ENCODE measurements at regions of chr14 and their contacts with region 1.

Region 1: GRCh38 chr14:56117765-56118610 is at the start of gene PELI2:
- DNase-seq: peak; percentile 66 to 94 (median 82)
- ATAC-seq: peak; percentile 86
- H3K4me3 ChIP-seq: peak within 1 kb of the TSS; percentile 73 to 74
- H3K4me3 Mint-ChIP-seq: peak within 1 kb of the TSS; percentile 95
- H3K27ac ChIP-seq: peak within 1 kb of the TSS; percentile 67 to 92
- H3K27ac Mint-ChIP-seq: peak within 1 kb of the TSS; percentile 99
- H3K4me1 ChIP-seq: peaks cover 34% of the 10 kb centered on the region
- H3K4me1 Mint-ChIP-seq: peaks cover 49% of the 10 kb centered on the region
- H3K27me3 ChIP-seq: no peaks in the 10 kb centered on the region
- H3K27me3 Mint-ChIP-seq: peaks cover 4% of the 10 kb centered on the region
- CTCF ChIP-seq: no peak
- total RNA-seq, gene PELI2: 13.3 to 15.1 TPM

Region 2: DNA sequence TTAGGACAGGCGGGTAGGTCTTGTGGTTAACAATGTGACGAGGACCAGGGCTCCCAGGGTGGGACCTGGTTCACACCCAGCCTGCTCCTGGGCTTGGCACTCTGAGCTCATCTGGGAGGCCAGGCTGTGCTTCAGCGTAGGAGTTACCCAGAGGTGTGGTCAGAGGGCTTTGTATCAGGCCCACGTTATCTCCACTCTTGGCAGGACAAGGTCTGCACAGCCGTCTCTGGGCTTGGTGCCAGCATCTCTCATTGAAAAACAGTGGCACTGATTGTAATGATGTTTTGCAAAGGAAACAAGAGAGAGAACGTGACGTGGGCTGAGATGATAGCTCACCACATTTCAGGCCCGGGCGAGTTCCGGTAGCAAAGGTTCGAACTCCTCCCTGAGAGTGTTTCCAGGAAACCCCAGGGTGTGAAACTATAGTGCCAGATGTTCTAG is 310.9 kb before region 1 on chr14:
- CTCF ChIA-PET with region 1: no interaction called
- POLR2A ChIA-PET with region 1: no interaction called
- intact Hi-C with region 1: loop called (anchors 2 to 5 kb)
- DNase-seq: peak; percentile 54 to 92 (median 77)
- ATAC-seq: peak; percentile 87
- H3K4me3 ChIP-seq: no peak overlapping the region
- H3K4me3 Mint-ChIP-seq: peak overlapping the region; percentile 44
- H3K27ac ChIP-seq: peak overlapping the region; percentile 34 to 81
- H3K27ac Mint-ChIP-seq: peak overlapping the region; percentile 85
- H3K4me1 ChIP-seq: peaks cover 17% of the 10 kb centered on the region
- H3K4me1 Mint-ChIP-seq: peaks cover 24% of the 10 kb centered on the region
- H3K27me3 ChIP-seq: no peaks in the 10 kb centered on the region
- H3K27me3 Mint-ChIP-seq: no peaks in the 10 kb centered on the region
- CTCF ChIP-seq: no peak

Region 3: DNA sequence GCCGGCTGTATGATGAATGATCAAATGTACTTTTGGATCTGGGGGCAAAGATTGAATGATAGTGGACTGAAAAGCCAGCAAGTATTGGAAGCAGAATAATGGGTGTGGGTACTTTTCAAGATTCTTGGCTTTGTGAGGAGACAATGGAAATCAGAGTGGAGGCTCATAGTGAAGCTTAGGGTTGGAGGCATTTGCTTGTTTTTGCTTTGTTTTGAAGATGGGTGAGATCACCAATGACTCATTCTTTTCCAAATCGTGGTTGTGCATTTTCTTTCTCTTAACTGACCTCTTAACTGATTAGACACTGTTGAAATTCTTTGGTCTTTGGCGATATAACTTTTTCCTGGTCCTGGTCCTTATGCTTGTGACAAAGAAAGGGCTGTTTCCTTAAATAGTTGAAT is 54.6 kb after region 1 on chr14:
- CTCF ChIA-PET with region 1: interaction called, 3 read pairs
- POLR2A ChIA-PET with region 1: interaction called, 3 read pairs
- intact Hi-C with region 1: loop called in 1 of 2 experiments (anchors 2 kb)
- DNase-seq: no peak
- ATAC-seq: no peak
- H3K4me3 ChIP-seq: no peak overlapping the region
- H3K4me3 Mint-ChIP-seq: peak overlapping the region; percentile 11
- H3K27ac ChIP-seq: no peak overlapping the region
- H3K27ac Mint-ChIP-seq: peak overlapping the region; percentile 84
- H3K4me1 ChIP-seq: peaks cover 22% of the 10 kb centered on the region
- H3K4me1 Mint-ChIP-seq: peaks cover 56% of the 10 kb centered on the region
- H3K27me3 ChIP-seq: no peaks in the 10 kb centered on the region
- H3K27me3 Mint-ChIP-seq: no peaks in the 10 kb centered on the region
- CTCF ChIP-seq: no peak

Region 4: GRCh38 chr14:56202256-56202655 is 84.3 kb after region 1 on chr14:
- CTCF ChIA-PET with region 1: no interaction called
- POLR2A ChIA-PET with region 1: no interaction called
- intact Hi-C with region 1: no loop called
- DNase-seq: no peak
- ATAC-seq: no peak
- H3K4me3 ChIP-seq: no peak overlapping the region
- H3K4me3 Mint-ChIP-seq: no peak overlapping the region
- H3K27ac ChIP-seq: no peak overlapping the region
- H3K27ac Mint-ChIP-seq: no peak overlapping the region
- H3K4me1 ChIP-seq: no peaks in the 10 kb centered on the region
- H3K4me1 Mint-ChIP-seq: no peaks in the 10 kb centered on the region
- H3K27me3 ChIP-seq: no peaks in the 10 kb centered on the region
- H3K27me3 Mint-ChIP-seq: no peaks in the 10 kb centered on the region
- CTCF ChIP-seq: no peak

Region 5: GRCh38 chr14:56676050-56676449 is 558.1 kb after region 1 on chr14:
- CTCF ChIA-PET with region 1: no interaction called
- POLR2A ChIA-PET with region 1: no interaction called
- intact Hi-C with region 1: no loop called
- DNase-seq: no peak
- ATAC-seq: no peak
- H3K4me3 ChIP-seq: no peak overlapping the region
- H3K4me3 Mint-ChIP-seq: no peak overlapping the region
- H3K27ac ChIP-seq: no peak overlapping the region
- H3K27ac Mint-ChIP-seq: no peak overlapping the region
- H3K4me1 ChIP-seq: no peaks in the 10 kb centered on the region
- H3K4me1 Mint-ChIP-seq: no peaks in the 10 kb centered on the region
- H3K27me3 ChIP-seq: no peaks in the 10 kb centered on the region
- H3K27me3 Mint-ChIP-seq: no peaks in the 10 kb centered on the region
- CTCF ChIP-seq: no peak

Region 6: DNA sequence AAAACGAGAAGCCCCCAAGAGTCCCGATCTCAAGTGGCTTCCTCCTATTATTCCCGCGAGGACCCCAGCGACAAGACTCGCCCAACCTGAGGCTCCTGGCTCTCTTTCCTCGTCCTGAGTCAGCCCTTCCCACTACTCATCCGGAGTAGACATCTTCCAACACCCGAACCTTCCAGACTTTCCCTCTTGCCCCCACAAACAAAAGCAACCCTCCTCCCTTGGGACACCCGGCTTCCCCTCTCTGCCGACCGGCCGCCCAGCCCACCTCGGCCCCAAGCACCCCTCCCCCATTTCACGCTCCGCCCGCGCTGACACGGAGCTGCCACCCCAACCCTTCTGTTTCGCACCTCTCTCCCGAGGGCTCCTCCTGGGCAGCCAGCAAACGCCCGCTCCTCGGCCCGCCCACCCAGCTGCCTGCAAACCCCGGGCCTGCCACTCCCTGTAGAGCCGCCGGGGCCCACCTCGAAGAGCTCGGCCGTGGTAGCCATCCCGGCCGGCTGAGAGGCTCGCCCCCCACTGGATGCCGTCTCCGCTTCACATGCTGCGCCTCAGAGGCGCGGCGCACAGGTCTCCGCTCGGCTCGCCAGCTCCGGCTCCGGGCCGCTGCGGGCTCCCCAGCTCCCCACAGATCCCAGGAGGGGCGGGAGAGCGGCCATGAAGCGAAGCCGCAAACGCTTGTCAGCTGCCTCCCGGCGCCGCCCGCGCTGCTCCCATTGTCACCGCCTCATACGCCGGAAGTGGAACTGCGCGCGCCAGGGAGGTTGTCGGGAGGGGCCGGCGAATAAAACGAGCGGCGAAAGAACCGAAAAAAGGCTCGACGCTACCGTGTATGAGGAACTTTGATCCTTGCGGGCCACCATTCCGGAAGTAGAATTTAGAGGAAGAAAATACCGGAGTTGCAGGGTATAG is 1150.4 kb after region 1 on chr14 and contains the starts of genes AP5M1 and EXOC5:
- CTCF ChIA-PET with region 1: no interaction called
- POLR2A ChIA-PET with region 1: no interaction called
- intact Hi-C with region 1: loop called (anchors 5 kb)
- DNase-seq: peak; percentile 80 to 97 (median 91)
- ATAC-seq: peak; percentile 80
- H3K4me3 ChIP-seq: peak within 1 kb of the TSS; percentile 77 to 84
- H3K4me3 Mint-ChIP-seq: peak within 1 kb of the TSS; percentile 99
- H3K27ac ChIP-seq: peak within 1 kb of the TSS; percentile 85 to 90
- H3K27ac Mint-ChIP-seq: peak within 1 kb of the TSS; percentile 100
- H3K4me1 ChIP-seq: peaks cover 35% of the 10 kb centered on the region
- H3K4me1 Mint-ChIP-seq: peaks cover 70% of the 10 kb centered on the region
- H3K27me3 ChIP-seq: no peaks in the 10 kb centered on the region
- H3K27me3 Mint-ChIP-seq: no peaks in the 10 kb centered on the region
- CTCF ChIP-seq: no peak
- total RNA-seq, gene AP5M1: 38.5 to 42.4 TPM
- total RNA-seq, gene EXOC5: 17.0 to 17.8 TPM